ENCODE measurements at regions of chr15 and their contacts with region 1.

Region 1: DNA sequence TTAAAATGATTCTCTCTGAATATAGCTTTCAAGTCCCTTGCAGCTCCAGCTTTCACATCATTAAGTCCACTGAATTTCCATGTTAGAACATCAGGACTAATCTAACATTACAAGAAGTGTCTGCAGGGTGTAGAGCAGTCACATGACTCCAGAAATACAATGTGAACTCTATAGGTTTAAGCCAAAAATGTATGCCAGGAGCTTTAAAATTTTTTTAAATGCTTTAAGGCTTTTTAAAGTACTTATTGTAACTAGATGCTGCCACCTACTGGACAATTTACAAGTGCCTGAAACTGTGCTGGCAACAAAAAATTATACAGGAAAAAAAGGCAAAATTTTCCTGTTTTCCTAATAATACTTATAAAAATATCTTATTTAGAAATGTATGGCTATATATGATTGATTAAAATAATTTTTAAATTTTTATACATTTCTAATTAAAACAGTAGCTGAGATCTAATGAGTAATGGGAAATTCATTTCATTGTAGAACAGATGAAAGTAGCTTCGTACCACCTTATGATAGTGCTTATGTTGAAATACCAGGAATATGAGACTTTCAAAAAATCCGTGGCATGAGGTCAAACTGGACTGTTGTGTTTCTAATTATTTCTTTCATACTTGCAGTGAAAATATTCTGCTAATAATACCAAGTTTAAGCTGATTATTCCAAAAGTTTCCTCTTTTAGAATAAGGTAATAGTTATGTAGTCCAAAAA is 25.7 kb downstream of the FSIP1 start:
- DNase-seq: no peak
- ATAC-seq: peak; percentile 50; the same call in 1 of the 3 replicates
- H3K4me3 ChIP-seq: no peak overlapping the region
- H3K27ac ChIP-seq: no peak overlapping the region
- H3K4me1 ChIP-seq: no peaks in the 10 kb centered on the region
- H3K27me3 ChIP-seq: no peaks in the 10 kb centered on the region
- CTCF ChIP-seq: peak; percentile 51 to 67 (median 57)
- EP300 ChIP-seq: no peak
- POLR2A ChIP-seq: no peak
- RAD21 ChIP-seq: peak; percentile 76

Region 2: DNA sequence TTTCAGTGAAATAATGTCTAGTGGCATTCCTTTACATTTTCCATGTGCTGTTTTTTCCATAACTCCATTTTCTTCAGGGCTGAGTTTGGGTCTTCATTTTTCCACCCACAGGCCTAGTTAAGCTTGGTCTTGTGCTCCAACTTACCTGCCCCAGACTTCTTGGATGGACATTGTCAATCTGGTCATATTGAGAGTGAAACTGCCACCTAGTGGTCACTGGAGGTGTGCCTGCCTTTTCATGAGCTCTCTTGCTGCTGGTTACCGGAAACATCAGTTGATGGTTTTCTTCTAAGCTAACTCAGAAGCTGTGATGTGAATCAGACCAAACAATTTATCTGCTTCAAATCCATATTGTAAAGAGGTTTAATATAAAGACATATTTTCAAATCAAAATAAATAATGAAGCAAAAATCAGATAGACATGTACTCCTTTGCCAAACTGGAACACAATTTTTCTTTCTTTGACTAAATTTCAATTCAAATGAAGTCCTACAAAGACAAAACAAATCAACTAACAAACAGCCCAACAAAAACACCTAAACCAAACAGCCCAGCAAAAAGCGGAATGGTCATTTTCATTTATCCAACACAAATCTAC is 1057.2 kb before region 1 on chr15:
- CTCF ChIA-PET with region 1: interaction called, 3 read pairs
- POLR2A ChIA-PET with region 1: no interaction called
- RAD21 ChIA-PET with region 1: no interaction called
- SMC1A ChIA-PET with region 1: interaction called, 4 read pairs
- in situ Hi-C with region 1: no loop called
- intact Hi-C with region 1: loop called (anchors 10 kb)
- DNase-seq: no peak
- ATAC-seq: peak; percentile 68
- H3K4me3 ChIP-seq: no peak overlapping the region
- H3K27ac ChIP-seq: no peak overlapping the region
- H3K4me1 ChIP-seq: peaks cover 19% of the 10 kb centered on the region
- H3K27me3 ChIP-seq: no peaks in the 10 kb centered on the region
- CTCF ChIP-seq: peak; percentile 85 to 92 (median 87)
- EP300 ChIP-seq: no peak
- POLR2A ChIP-seq: no peak
- RAD21 ChIP-seq: peak; percentile 79

Region 3: GRCh38 chr15:39171944-39172368 is 585.0 kb before region 1 on chr15:
- CTCF ChIA-PET with region 1: interaction called, 5 read pairs
- POLR2A ChIA-PET with region 1: no interaction called
- RAD21 ChIA-PET with region 1: no interaction called
- SMC1A ChIA-PET with region 1: interaction called, 4 read pairs
- in situ Hi-C with region 1: no loop called
- intact Hi-C with region 1: loop called (anchors 2 kb)
- DNase-seq: peak; percentile 19
- ATAC-seq: peak; percentile 70
- H3K4me3 ChIP-seq: no peak overlapping the region
- H3K27ac ChIP-seq: no peak overlapping the region
- H3K4me1 ChIP-seq: peaks cover 10% of the 10 kb centered on the region
- H3K27me3 ChIP-seq: no peaks in the 10 kb centered on the region
- CTCF ChIP-seq: peak in 2 of 3 experiments; percentile 26 to 53; a peak in 4 of 6 replicates
- EP300 ChIP-seq: no peak
- POLR2A ChIP-seq: no peak
- RAD21 ChIP-seq: peak; percentile 60

Region 4: DNA sequence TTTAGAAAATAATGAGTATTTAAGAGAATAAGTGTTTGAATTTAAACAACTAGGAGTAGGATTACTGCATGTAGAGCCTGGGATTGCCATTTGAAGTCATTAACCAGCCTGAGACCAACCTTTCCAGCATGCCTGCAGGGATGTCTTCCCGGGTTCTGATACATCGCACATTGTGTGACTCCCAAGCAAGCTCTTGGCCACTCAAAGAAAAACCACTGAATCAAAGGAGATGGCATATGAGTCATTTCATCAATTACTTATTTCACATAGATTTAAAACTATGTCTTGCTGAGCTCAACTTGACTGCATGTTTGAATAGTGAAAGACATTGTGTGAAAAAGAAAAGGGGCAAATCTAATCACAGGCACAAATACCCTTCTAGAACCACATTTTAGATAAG is 191.1 kb before region 1 on chr15:
- CTCF ChIA-PET with region 1: no interaction called
- POLR2A ChIA-PET with region 1: no interaction called
- RAD21 ChIA-PET with region 1: no interaction called
- SMC1A ChIA-PET with region 1: no interaction called
- in situ Hi-C with region 1: no loop called
- intact Hi-C with region 1: no loop called
- DNase-seq: no peak
- ATAC-seq: no peak
- H3K4me3 ChIP-seq: no peak overlapping the region
- H3K27ac ChIP-seq: no peak overlapping the region
- H3K4me1 ChIP-seq: no peaks in the 10 kb centered on the region
- H3K27me3 ChIP-seq: no peaks in the 10 kb centered on the region
- CTCF ChIP-seq: no peak
- EP300 ChIP-seq: no peak
- POLR2A ChIP-seq: no peak
- RAD21 ChIP-seq: no peak

Region 5: GRCh38 chr15:39602143-39602542 is 154.8 kb before region 1 on chr15:
- CTCF ChIA-PET with region 1: interaction called, 25 read pairs
- POLR2A ChIA-PET with region 1: no interaction called
- RAD21 ChIA-PET with region 1: interaction called, 5 read pairs
- SMC1A ChIA-PET with region 1: interaction called, 7 read pairs
- in situ Hi-C with region 1: no loop called
- intact Hi-C with region 1: no loop called
- DNase-seq: no peak
- ATAC-seq: no peak
- H3K4me3 ChIP-seq: no peak overlapping the region
- H3K27ac ChIP-seq: no peak overlapping the region
- H3K4me1 ChIP-seq: no peaks in the 10 kb centered on the region
- H3K27me3 ChIP-seq: peaks cover 0 to 2% of the 10 kb centered on the region in 2 experiments; a peak in 1 of 4 replicates
- CTCF ChIP-seq: 0 out of 6 replicates have a peak, but pooled peaks of 1 of the 3 experiments have one; percentile 1
- EP300 ChIP-seq: no peak
- POLR2A ChIP-seq: no peak
- RAD21 ChIP-seq: peak; percentile 10; the same call in 1 of the 2 replicates

Region 6: GRCh38 chr15:39686000-39686613 is 70.9 kb before region 1 on chr15:
- CTCF ChIA-PET with region 1: interaction called, 400 read pairs
- POLR2A ChIA-PET with region 1: no interaction called
- RAD21 ChIA-PET with region 1: interaction called, 137 read pairs
- SMC1A ChIA-PET with region 1: interaction called, 220 read pairs
- in situ Hi-C with region 1: no loop called
- intact Hi-C with region 1: loop called (anchors 1 kb)
- DNase-seq: no peak
- ATAC-seq: peak; percentile 84
- H3K4me3 ChIP-seq: no peak overlapping the region
- H3K27ac ChIP-seq: no peak overlapping the region
- H3K4me1 ChIP-seq: no peaks in the 10 kb centered on the region
- H3K27me3 ChIP-seq: no peaks in the 10 kb centered on the region; a peak in 1 of 4 replicates
- CTCF ChIP-seq: peak; percentile 61 to 78 (median 65)
- EP300 ChIP-seq: no peak
- POLR2A ChIP-seq: no peak
- RAD21 ChIP-seq: peak; percentile 79

Region 7: GRCh38 chr15:39720621-39721611 is 36.0 kb before region 1 on chr15:
- CTCF ChIA-PET with region 1: interaction called, 8 read pairs
- POLR2A ChIA-PET with region 1: no interaction called
- RAD21 ChIA-PET with region 1: interaction called, 14 read pairs
- SMC1A ChIA-PET with region 1: interaction called, 10 read pairs
- in situ Hi-C with region 1: no loop called
- intact Hi-C with region 1: no loop called
- DNase-seq: no peak
- ATAC-seq: no peak
- H3K4me3 ChIP-seq: no peak overlapping the region
- H3K27ac ChIP-seq: no peak overlapping the region
- H3K4me1 ChIP-seq: no peaks in the 10 kb centered on the region
- H3K27me3 ChIP-seq: no peaks in the 10 kb centered on the region
- CTCF ChIP-seq: no peak
- EP300 ChIP-seq: no peak
- POLR2A ChIP-seq: no peak
- RAD21 ChIP-seq: no peak

Region 8: GRCh38 chr15:39908186-39908585 is 151.2 kb after region 1 on chr15:
- CTCF ChIA-PET with region 1: no interaction called
- POLR2A ChIA-PET with region 1: no interaction called
- RAD21 ChIA-PET with region 1: no interaction called
- SMC1A ChIA-PET with region 1: no interaction called
- in situ Hi-C with region 1: no loop called
- intact Hi-C with region 1: no loop called
- DNase-seq: no peak
- ATAC-seq: no peak
- H3K4me3 ChIP-seq: no peak overlapping the region
- H3K27ac ChIP-seq: no peak overlapping the region
- H3K4me1 ChIP-seq: no peaks in the 10 kb centered on the region
- H3K27me3 ChIP-seq: peaks cover 0 to 1% of the 10 kb centered on the region in 2 experiments; a peak in 1 of 4 replicates
- CTCF ChIP-seq: no peak
- EP300 ChIP-seq: no peak
- POLR2A ChIP-seq: no peak
- RAD21 ChIP-seq: no peak